Calu3 (cell line): ENCODE measurements at regions of chr5 and their contacts with region 1.

Region 1: GRCh38 chr5:120803282-120803681 is 339.2 kb downstream of the PRR16 start:
- DNase-seq: no peak
- H3K4me3 Mint-ChIP-seq: no peak overlapping the region
- H3K27ac Mint-ChIP-seq: no peak overlapping the region
- H3K4me1 Mint-ChIP-seq: peaks cover 14% of the 10 kb centered on the region
- H3K27me3 Mint-ChIP-seq: no peaks in the 10 kb centered on the region
- CTCF ChIP-seq: no peak

Region 2: DNA sequence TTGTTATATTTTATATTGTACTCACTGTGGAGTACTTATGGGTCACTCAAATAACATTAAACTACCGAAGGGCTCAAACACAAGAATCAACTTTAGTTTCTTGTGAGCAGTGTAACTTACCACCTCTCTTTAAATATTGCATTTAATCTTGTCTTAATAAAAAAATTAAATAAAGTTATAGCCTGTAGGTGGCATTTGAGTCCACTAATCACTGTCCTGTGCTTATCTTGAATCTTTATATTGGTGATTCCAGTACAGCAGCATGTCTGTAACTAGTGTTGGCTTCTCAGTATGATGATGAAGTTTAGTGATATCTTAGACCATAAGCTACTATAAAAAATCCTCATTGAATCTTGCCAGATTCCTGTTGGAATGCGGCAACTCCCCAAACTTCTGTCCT is 860.1 kb before region 1 on chr5:
- CTCF ChIA-PET with region 1: no interaction called
- intact Hi-C with region 1: loop called (anchors 5 kb)
- DNase-seq: no peak
- H3K4me3 Mint-ChIP-seq: no peak overlapping the region
- H3K27ac Mint-ChIP-seq: no peak overlapping the region
- H3K4me1 Mint-ChIP-seq: no peaks in the 10 kb centered on the region
- H3K27me3 Mint-ChIP-seq: no peaks in the 10 kb centered on the region
- CTCF ChIP-seq: peak; percentile 12

Region 3: DNA sequence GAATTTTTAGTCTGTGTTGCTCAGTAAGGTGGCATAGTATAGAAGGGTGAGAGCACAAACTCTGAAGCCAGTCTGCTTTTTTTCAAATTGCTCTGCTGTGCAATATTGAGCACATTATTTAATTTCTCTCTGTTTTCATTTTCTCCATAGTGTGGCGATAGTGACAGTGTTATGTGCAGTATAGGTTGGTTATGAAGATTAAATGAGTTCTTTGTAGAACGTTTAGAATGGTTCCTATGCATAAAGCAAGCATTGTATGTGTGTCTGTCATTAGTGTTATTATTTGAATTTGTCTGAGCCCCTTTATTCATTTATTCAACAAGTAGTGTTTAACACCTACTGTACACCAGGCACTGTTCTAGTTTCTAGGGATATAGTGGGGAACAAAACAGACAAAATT is 329.9 kb before region 1 on chr5:
- CTCF ChIA-PET with region 1: no interaction called
- intact Hi-C with region 1: loop called (anchors 5 kb)
- DNase-seq: no peak
- H3K4me3 Mint-ChIP-seq: no peak overlapping the region
- H3K27ac Mint-ChIP-seq: no peak overlapping the region
- H3K4me1 Mint-ChIP-seq: peaks cover 16% of the 10 kb centered on the region
- H3K27me3 Mint-ChIP-seq: no peaks in the 10 kb centered on the region
- CTCF ChIP-seq: no peak

Region 4: DNA sequence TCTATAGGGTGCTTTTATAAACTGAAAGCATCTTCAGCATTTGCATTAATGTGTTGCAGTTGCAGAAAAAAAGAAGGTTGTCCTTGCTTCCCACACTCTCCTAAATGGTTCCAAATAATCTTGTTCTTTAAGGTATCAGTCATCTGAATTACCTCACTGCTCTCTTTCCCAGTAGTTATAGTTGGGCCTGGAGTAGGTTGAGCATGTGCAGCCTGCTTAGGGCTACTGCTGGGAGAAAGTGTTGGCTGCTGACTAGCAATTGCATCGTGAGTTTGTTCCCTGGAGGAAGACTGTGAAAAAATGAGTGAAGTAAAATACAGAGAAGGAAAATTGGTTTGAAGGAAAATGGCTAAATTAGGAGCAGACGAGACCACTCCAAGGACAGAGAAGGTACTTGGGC is 264.6 kb before region 1 on chr5:
- CTCF ChIA-PET with region 1: no interaction called
- intact Hi-C with region 1: no loop called
- DNase-seq: no peak
- H3K4me3 Mint-ChIP-seq: no peak overlapping the region
- H3K27ac Mint-ChIP-seq: peak overlapping the region; percentile 49
- H3K4me1 Mint-ChIP-seq: peaks cover 32% of the 10 kb centered on the region
- H3K27me3 Mint-ChIP-seq: no peaks in the 10 kb centered on the region
- CTCF ChIP-seq: no peak

Region 5: GRCh38 chr5:120630550-120630949 is 172.7 kb before region 1 on chr5:
- CTCF ChIA-PET with region 1: no interaction called
- intact Hi-C with region 1: no loop called
- DNase-seq: no peak
- H3K4me3 Mint-ChIP-seq: no peak overlapping the region
- H3K27ac Mint-ChIP-seq: no peak overlapping the region
- H3K4me1 Mint-ChIP-seq: no peaks in the 10 kb centered on the region
- H3K27me3 Mint-ChIP-seq: no peaks in the 10 kb centered on the region
- CTCF ChIP-seq: no peak

Region 6: GRCh38 chr5:120901199-120901598 is 97.9 kb after region 1 on chr5:
- CTCF ChIA-PET with region 1: no interaction called
- intact Hi-C with region 1: no loop called
- DNase-seq: peak; percentile 13
- H3K4me3 Mint-ChIP-seq: no peak overlapping the region
- H3K27ac Mint-ChIP-seq: no peak overlapping the region
- H3K4me1 Mint-ChIP-seq: no peaks in the 10 kb centered on the region
- H3K27me3 Mint-ChIP-seq: no peaks in the 10 kb centered on the region
- CTCF ChIP-seq: no peak